ENCODE measurements at regions of chr11 and their contacts with region 1.

Region 1: GRCh38 chr11:62542750-62543567 is 3.6 kb downstream of the AHNAK start:
- DNase-seq: peak in 1 of 2 donors; percentile 91
- H3K4me3 ChIP-seq: peak overlapping the region; percentile 99 to 100
- H3K27ac ChIP-seq: peak overlapping the region; percentile 100
- H3K4me1 ChIP-seq: peaks cover 75% of the 10 kb centered on the region
- H3K27me3 ChIP-seq: no peaks in the 10 kb centered on the region
- CTCF ChIP-seq: peak; percentile 90 to 100 (median 95)
- POLR2A ChIP-seq: no peak

Region 2: DNA sequence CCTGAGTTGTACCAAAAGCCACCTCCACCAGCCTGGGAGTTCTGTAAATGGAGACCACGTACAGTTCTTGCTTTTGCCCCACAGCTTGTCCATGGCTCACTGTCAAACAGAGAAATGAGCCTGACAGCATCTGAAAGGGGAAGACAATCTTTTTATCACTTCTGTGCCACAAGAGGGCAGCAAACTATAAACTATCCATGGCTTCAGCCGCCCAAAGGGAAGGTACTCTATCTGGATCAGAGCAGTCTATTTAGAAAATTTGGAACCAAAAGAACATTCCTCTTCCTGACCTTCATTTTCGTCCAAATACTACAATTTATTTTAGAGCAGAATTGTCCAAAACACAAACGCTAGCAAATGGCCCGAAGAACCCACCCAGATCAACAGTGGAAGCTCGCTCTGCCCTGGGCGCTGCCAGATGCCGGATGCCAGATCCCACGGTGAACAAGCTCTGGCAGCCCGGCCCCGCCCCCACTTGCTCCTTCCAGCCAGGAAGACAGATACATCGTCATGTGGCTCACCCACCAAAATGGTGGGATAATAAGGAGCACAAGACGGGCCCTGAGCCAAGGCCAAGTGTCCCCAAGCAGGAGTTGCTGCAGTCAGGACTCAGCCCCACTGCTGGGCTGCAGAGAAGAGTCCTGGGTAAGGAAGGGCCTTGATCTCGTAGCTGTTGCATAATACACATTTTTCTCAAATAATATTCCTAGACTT is 148.0 kb before region 1 on chr11:
- intact Hi-C with region 1: loop called (anchors 2 kb)
- DNase-seq: no peak
- H3K4me3 ChIP-seq: peak overlapping the region; percentile 24 to 33
- H3K27ac ChIP-seq: peak overlapping the region; percentile 75
- H3K4me1 ChIP-seq: peaks cover 65% of the 10 kb centered on the region
- H3K27me3 ChIP-seq: no peaks in the 10 kb centered on the region
- CTCF ChIP-seq: peak; percentile 62 to 78 (median 74)
- POLR2A ChIP-seq: no peak

Region 3: GRCh38 chr11:62421996-62422395 is 121.0 kb before region 1 on chr11:
- intact Hi-C with region 1: loop called (anchors 5 kb)
- DNase-seq: no peak
- H3K4me3 ChIP-seq: no peak overlapping the region
- H3K27ac ChIP-seq: peak overlapping the region; percentile 86
- H3K4me1 ChIP-seq: peaks cover 41% of the 10 kb centered on the region
- H3K27me3 ChIP-seq: no peaks in the 10 kb centered on the region
- CTCF ChIP-seq: no peak
- POLR2A ChIP-seq: no peak

Region 4: DNA sequence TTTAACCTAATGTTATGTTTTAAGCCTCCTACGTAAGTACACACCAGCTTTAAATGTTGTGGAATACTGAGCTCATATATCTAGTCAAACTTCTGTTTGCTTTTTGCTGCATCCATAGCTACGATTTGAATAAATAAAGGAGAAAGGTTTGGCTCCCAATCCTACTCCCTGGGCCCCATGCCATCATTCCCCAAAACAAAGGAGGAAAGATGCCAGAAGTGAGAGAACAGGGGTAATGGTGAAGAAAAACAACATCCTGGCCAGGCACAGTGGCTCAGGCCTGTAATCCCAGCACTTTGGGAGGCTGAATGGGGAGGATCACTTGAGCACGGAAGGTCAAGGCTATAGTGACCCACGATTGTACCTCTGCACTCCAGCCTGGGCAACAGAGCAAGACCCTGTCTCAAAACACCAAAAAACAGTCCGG is 97.6 kb before region 1 on chr11:
- intact Hi-C with region 1: loop called (anchors 5 kb)
- DNase-seq: no peak
- H3K4me3 ChIP-seq: no peak overlapping the region
- H3K27ac ChIP-seq: peak overlapping the region; percentile 93
- H3K4me1 ChIP-seq: peaks cover 46% of the 10 kb centered on the region
- H3K27me3 ChIP-seq: no peaks in the 10 kb centered on the region
- CTCF ChIP-seq: no peak
- POLR2A ChIP-seq: no peak

Region 5: GRCh38 chr11:62573592-62574362 is 30.8 kb after region 1 on chr11 and contains the start of gene EEF1G:
- intact Hi-C with region 1: loop called (anchors 1 kb)
- DNase-seq: peak in 1 of 2 donors; percentile 100
- H3K4me3 ChIP-seq: peak within 1 kb of the TSS; percentile 79 to 84
- H3K27ac ChIP-seq: peak within 1 kb of the TSS; percentile 100
- H3K4me1 ChIP-seq: peaks cover 54% of the 10 kb centered on the region
- H3K27me3 ChIP-seq: no peaks in the 10 kb centered on the region
- CTCF ChIP-seq: peak in 1 of 3 experiments; percentile 6
- POLR2A ChIP-seq: peak in 1 of 2 donors; percentile 88
- total RNA-seq, gene EEF1G: 1,183 TPM

Measured in vagina (tissue), 2 donors.